Naive thymus-derived CD4-positive, alpha-beta T cell (primary cell): ENCODE measurements at regions of chr2 and their contacts with region 1.

Region 1: GRCh38 chr2:12005886-12006681 is 259.7 kb downstream of the LPIN1 start:
- DNase-seq: peak; percentile 25 to 64 (median 45)
- ATAC-seq: peak; percentile 94
- H3K4me3 ChIP-seq: no peak overlapping the region
- H3K4me3 Mint-ChIP-seq: peak overlapping the region in 6 of 10 donors; percentile 15 to 57 (median 42)
- H3K27ac ChIP-seq: no peak overlapping the region
- H3K27ac Mint-ChIP-seq: peak overlapping the region in 4 of 9 donors; percentile 9 to 52 (median 38)
- H3K4me1 ChIP-seq: peaks cover 17 to 20% of the 10 kb centered on the region in 2 donors
- H3K4me1 Mint-ChIP-seq: peaks cover 12 to 42% (median 29%) of the 10 kb centered on the region in 7 donors
- H3K27me3 ChIP-seq: peaks cover 0 to 12% of the 10 kb centered on the region in 2 donors
- H3K27me3 Mint-ChIP-seq: peaks cover 0 to 56% (median 2%) of the 10 kb centered on the region in 5 donors

Region 2: GRCh38 chr2:12151716-12152115 is 145.6 kb after region 1 on chr2:
- CTCF ChIA-PET with region 1: no interaction called
- POLR2A ChIA-PET with region 1: no interaction called
- intact Hi-C with region 1: loop called in 1 of 2 experiments (anchors 5 kb)
- DNase-seq: no peak
- ATAC-seq: no peak
- H3K4me3 ChIP-seq: no peak overlapping the region
- H3K4me3 Mint-ChIP-seq: no peak overlapping the region
- H3K27ac ChIP-seq: no peak overlapping the region
- H3K27ac Mint-ChIP-seq: no peak overlapping the region
- H3K4me1 ChIP-seq: no peaks in the 10 kb centered on the region
- H3K4me1 Mint-ChIP-seq: peaks cover 0 to 20% (median 0%) of the 10 kb centered on the region in 7 donors
- H3K27me3 ChIP-seq: no peaks in the 10 kb centered on the region
- H3K27me3 Mint-ChIP-seq: peaks cover 0 to 24% (median 0%) of the 10 kb centered on the region in 5 donors